ENCODE measurements at regions of chr5 and their contacts with region 1.

Region 1: GRCh38 chr5:72816311-72817145 is at the start of gene TNPO1:
- DNase-seq: peak; percentile 91
- CTCF ChIP-seq: no peak

Region 2: DNA sequence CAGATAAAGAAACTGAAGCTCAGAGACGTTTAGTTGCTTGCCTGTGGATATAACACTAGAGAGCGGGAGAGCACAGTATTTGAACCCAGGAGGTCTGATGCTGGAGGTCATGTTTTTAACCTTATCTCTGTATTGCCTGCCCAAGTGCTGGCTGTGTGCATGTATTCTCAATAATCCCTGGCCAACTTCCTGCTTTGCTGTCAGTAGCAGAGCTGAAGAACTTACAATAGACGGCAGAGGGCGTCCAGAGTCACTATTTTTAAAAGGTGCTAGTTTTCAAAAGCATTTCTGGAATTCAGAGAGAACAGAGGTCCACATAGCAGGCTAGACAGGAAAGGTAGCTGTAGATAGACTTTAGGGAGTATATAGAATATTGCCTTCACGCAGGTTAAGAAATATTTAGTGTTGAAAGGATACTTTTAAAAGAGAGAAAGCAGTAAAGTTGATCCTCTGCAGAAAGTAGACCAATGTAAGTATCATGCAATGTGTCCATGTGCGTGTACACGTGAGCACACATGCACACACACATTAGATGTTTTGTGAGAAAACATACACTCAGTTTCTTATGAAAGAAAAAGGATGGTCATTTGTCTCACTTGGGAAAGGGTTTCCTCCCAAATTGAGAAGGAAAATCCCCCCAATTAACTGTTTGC is 450.1 kb before region 1 on chr5:
- in situ Hi-C with region 1: loop called (anchors 25 kb)
- DNase-seq: peak; percentile 43
- CTCF ChIP-seq: peak; percentile 54

Region 3: GRCh38 chr5:72955768-72956323 is 139.3 kb after region 1 on chr5 and contains the start of gene FCHO2:
- in situ Hi-C with region 1: no loop called
- DNase-seq: peak; percentile 98
- CTCF ChIP-seq: peak; percentile 92

Region 4: DNA sequence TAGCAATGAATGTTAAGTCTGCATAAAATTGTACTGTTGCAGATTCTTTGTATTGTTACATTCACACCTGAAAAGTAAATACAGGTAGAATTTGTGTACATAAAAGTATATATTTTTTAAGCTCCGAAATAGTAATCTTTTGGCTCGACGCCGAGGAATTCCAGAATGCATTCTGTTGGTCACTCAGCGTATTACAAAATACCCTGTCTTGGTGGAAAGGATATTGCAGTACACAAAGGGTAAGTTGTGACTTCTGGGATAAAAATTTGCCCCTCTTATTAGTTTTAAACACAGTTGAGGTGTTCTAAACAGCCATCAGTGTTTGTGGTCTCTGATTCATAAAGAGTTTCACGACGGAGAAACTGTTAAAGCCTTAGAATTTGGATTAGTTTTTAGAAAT is 1067.1 kb after region 1 on chr5:
- in situ Hi-C with region 1: no loop called
- DNase-seq: no peak
- CTCF ChIP-seq: no peak